ENCODE measurements at regions of chr1 and their contacts with region 1.

Region 1: DNA sequence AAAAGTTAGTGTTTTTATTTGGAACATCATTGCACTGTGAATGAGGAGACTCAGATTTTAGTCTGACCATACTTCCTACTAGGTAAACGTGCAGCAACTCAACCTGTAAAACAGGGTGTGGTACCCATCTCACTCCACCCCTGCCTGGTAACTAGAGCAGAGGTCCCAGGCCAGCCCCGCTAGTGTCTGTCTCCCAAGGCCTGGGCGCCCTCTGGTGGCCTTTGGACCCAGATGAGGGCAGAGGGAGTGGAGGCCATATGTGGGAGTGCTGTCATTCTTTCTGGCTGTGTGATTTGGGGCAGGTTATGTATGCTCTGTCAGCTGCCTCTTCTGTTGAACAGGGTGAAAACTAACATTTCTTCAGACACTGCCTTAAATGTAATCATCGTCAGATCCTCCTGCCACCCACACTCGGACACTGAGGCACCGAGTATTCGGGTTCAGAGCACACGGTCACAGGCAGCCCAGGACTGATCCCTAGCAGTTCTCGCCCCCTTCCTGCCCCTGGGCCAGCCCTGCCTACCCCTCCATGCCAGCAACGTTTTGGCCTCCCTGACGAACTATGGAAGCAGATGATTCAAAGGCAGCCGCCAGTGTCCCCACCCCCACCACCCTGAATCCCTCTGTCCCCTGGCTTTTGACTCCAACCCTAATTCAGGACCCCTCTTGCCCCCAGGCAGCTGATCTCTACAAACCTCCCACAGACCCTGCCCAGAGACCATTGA is 76.0 kb downstream of the CD247 start:
- DNase-seq: peak; percentile 87
- H3K4me3 ChIP-seq: no peak overlapping the region
- H3K27ac ChIP-seq: no peak overlapping the region
- H3K4me1 ChIP-seq: peaks cover 4% of the 10 kb centered on the region
- H3K27me3 ChIP-seq: no peaks in the 10 kb centered on the region
- CTCF ChIP-seq: peak; percentile 86

Region 2: DNA sequence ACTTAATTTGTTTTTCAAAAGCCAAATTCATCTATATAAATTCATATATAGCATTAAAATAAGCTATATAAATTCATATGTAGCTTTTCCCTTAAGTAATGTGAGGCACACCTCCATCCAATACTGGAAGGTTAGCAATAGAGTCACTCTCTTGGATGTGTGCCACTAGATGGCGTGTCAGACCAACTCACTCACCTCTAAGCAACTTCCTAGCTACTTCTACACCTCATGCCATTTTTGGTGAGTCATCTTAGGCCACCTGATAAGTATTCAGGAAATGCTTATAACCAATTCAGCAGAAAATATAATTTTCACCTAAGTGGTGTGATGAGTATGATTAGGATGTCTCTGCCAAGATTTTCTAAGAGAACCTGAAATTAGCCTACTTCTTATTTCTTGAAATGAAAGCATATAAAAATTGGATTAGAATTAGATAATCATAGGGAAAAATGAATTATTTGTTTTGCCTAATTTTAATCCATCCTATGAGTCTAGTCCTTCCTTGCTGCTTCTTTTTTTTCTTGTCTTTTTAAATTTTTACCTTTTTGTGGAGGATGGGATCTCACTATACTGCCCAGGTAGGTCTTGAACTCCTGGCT is 531.8 kb before region 1 on chr1:
- CTCF ChIA-PET with region 1: no interaction called
- POLR2A ChIA-PET with region 1: no interaction called
- intact Hi-C with region 1: loop called (anchors 5 kb)
- DNase-seq: peak; percentile 83
- H3K4me3 ChIP-seq: no peak overlapping the region
- H3K27ac ChIP-seq: no peak overlapping the region
- H3K4me1 ChIP-seq: no peaks in the 10 kb centered on the region
- H3K27me3 ChIP-seq: peaks cover 33% of the 10 kb centered on the region
- CTCF ChIP-seq: peak; percentile 89

Region 3: GRCh38 chr1:167273027-167273800 is 169.1 kb before region 1 on chr1:
- CTCF ChIA-PET with region 1: interaction called, 5 read pairs
- POLR2A ChIA-PET with region 1: no interaction called
- intact Hi-C with region 1: loop called (anchors 1 kb)
- DNase-seq: peak; percentile 72
- H3K4me3 ChIP-seq: no peak overlapping the region
- H3K27ac ChIP-seq: peak overlapping the region; percentile 40
- H3K4me1 ChIP-seq: peaks cover 61% of the 10 kb centered on the region
- H3K27me3 ChIP-seq: no peaks in the 10 kb centered on the region
- CTCF ChIP-seq: no peak

Region 4: DNA sequence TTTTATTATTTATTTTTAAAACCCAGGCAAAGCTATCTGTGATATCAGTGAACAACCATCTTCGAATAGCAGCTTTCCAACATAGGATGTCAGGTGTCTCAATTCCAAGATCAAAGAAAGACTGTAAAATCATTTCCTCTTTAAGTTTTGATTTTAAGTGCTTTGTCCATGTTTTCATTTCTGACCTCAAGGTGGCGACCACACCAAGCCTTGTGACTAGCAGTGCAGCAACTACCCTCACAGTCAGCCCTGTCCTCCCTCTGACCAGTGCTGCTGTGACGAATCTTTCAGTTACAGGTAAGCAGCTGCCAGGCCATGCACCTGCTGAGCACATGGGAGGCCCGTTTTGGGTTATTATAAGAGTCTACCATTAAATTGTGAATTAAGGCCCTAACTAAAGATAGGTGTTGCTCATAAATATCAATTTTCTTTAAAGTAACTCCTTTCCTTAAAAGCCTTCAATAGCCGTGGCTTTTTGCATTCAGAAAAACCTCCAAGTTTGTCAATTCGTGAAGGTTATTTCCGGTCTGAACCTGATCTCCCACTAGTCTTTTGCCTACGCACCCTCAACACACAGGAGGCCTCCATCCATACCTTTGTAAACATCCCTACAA is 40.9 kb before region 1 on chr1:
- CTCF ChIA-PET with region 1: no interaction called
- POLR2A ChIA-PET with region 1: no interaction called
- intact Hi-C with region 1: loop called (anchors 5 kb)
- DNase-seq: peak; percentile 27
- H3K4me3 ChIP-seq: no peak overlapping the region
- H3K27ac ChIP-seq: no peak overlapping the region
- H3K4me1 ChIP-seq: no peaks in the 10 kb centered on the region
- H3K27me3 ChIP-seq: no peaks in the 10 kb centered on the region
- CTCF ChIP-seq: peak; percentile 69